Heart right ventricle (tissue), 16 donors: ENCODE measurements at regions of chr10 and their contacts with region 1.

Region 1: DNA sequence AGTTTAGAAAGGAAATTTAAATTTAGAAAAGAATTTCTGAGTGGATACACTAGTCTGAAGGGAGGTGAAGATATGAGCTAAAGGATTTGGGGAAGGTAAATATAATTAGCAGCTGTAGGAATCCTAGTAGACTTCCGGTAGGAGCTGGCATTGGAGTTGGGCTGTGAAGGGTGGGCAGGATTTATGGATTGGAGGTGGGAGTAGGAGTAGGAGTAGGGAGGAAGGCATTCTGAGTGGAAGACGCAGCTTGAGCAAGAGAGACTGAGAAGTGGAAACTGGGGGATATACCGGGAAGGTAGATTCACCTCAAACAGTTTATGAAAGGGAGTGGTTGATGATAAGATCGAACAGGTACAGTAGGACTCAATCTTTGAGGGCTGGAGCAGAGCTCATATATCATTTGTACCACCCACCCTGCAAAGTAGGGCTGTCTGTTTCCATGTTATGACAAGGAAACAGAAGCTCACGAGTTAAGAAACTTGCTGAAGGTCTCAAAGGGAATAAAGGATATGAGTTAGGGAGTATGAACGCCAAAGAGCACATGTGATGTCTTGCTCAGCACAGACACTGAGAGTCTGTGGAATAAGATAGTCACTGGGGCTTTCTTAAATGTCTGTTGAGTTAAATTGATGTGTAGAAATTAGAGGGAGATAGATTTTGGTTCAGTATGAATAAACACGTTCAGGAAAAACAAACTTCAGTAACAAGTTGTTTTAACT is 81.6 kb downstream of the RPS24 start:
- DNase-seq: no peak
- ATAC-seq: no peak
- H3K4me3 ChIP-seq: no peak overlapping the region
- H3K27ac ChIP-seq: no peak overlapping the region
- H3K4me1 ChIP-seq: no peaks in the 10 kb centered on the region
- H3K27me3 ChIP-seq: peaks cover 0 to 20% (median 0%) of the 10 kb centered on the region in 7 donors
- CTCF ChIP-seq: no peak

Region 2: GRCh38 chr10:78053211-78053868 is 62.0 kb before region 1 on chr10:
- intact Hi-C with region 1: no loop called
- DNase-seq: no peak
- ATAC-seq: peak in 4 of 8 donors; percentile 24 to 52 (median 42)
- H3K4me3 ChIP-seq: no peak overlapping the region
- H3K27ac ChIP-seq: no peak overlapping the region
- H3K4me1 ChIP-seq: peaks cover 0 to 10% (median 0%) of the 10 kb centered on the region in 9 donors
- H3K27me3 ChIP-seq: no peaks in the 10 kb centered on the region
- CTCF ChIP-seq: no peak

Region 3: GRCh38 chr10:78146200-78146599 is 30.9 kb after region 1 on chr10:
- intact Hi-C with region 1: loop called in 1 of 10 experiments (anchors 1 kb)
- DNase-seq: no peak
- ATAC-seq: no peak
- H3K4me3 ChIP-seq: no peak overlapping the region
- H3K27ac ChIP-seq: no peak overlapping the region
- H3K4me1 ChIP-seq: no peaks in the 10 kb centered on the region
- H3K27me3 ChIP-seq: peaks cover 0 to 8% (median 0%) of the 10 kb centered on the region in 7 donors
- CTCF ChIP-seq: no peak